Calu3 (cell line): ENCODE measurements at regions of chr6 and their contacts with region 1.

Region 1: GRCh38 chr6:41652004-41652657 is 13.9 kb downstream of the MDFI start:
- DNase-seq: no peak
- H3K4me3 Mint-ChIP-seq: no peak overlapping the region
- H3K27ac Mint-ChIP-seq: no peak overlapping the region
- H3K4me1 Mint-ChIP-seq: no peaks in the 10 kb centered on the region
- H3K27me3 Mint-ChIP-seq: peaks cover 2% of the 10 kb centered on the region
- CTCF ChIP-seq: no peak

Region 2: DNA sequence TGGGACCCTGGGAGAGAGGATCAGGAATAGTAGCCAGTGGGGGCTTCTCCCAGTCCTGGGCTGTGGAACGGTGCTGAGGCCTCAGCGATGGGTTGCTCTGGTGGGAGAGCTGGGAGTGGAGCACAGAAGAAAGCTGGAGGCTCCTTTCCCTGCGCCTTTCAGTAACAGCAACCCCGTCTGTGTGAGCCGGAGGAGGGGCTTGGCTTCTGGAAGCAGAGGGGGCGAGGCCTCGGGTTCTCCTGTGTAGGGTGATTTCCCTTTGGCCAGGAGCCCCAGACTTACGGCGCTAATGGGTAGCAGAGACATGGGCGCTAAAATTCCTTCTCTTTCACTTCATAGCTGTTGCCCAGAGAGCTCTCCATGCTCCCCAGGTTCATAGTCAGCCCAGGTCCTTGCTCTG is 1804.9 kb before region 1 on chr6:
- CTCF ChIA-PET with region 1: no interaction called
- intact Hi-C with region 1: no loop called
- DNase-seq: no peak
- H3K4me3 Mint-ChIP-seq: no peak overlapping the region
- H3K27ac Mint-ChIP-seq: no peak overlapping the region
- H3K4me1 Mint-ChIP-seq: no peaks in the 10 kb centered on the region
- H3K27me3 Mint-ChIP-seq: peaks cover 42% of the 10 kb centered on the region
- CTCF ChIP-seq: no peak

Region 3: DNA sequence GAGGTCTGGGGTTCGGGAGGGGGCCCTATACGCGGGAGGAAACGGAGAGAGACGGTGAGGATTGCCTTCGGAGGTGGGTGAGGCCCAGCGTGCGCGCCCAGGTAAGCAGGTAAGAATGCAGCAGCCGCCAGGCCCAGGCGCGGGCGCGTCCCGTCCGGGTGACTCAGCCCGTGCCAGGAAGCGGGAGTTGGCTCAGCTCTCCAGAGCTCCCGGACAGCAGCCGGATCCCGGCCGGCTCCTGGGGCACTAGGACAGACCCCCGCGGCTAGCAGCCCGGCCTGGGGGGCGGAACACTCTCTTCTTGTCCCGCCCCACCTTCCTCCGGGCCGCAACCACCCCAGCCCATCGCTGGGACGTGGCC is 15.3 kb before region 1 on chr6:
- CTCF ChIA-PET with region 1: interaction called, 10 read pairs
- intact Hi-C with region 1: no loop called
- DNase-seq: peak; percentile 93
- H3K4me3 Mint-ChIP-seq: peak overlapping the region; percentile 62
- H3K27ac Mint-ChIP-seq: peak overlapping the region; percentile 54
- H3K4me1 Mint-ChIP-seq: peaks cover 29% of the 10 kb centered on the region
- H3K27me3 Mint-ChIP-seq: peaks cover 9% of the 10 kb centered on the region
- CTCF ChIP-seq: no peak